Gastrocnemius medialis (tissue), 4 donors: ENCODE measurements at regions of chr10 and their contacts with region 1.

Region 1: DNA sequence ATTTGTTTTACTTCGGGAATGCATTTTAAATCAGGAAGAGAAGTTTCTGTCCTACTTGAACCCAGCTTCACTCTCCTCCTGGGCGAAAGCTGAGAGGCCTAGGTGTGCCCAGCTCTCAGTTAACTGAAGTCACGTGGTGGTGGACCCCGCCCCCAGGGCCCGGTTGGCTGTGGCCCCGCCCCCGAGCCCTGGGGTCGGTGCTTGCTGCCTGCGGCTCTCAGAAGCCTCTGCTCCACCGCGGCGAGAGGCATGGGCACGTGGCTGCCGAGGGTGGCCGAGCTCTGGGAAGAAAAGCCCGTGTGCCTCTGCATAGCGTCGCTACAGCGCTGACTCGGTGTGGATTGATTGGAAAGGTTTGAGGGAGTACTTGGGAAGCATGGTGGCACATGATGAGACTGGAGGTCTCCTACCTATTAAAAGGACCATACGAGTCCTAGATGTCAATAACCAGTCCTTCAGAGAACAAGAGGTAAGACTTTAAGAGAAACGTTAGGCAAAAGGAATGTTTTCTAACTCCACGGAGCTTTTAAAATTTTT is 34.1 kb downstream of the NET1 start:
- DNase-seq: peak; percentile 86 to 91
- ATAC-seq: peak; percentile 80 to 84
- H3K4me3 ChIP-seq: peak overlapping the region; percentile 38 to 62 (median 54)
- H3K27ac ChIP-seq: peak overlapping the region; percentile 67 to 84 (median 73)
- H3K4me1 ChIP-seq: peaks cover 25 to 32% of the 10 kb centered on the region in 2 donors
- H3K27me3 ChIP-seq: no peaks in the 10 kb centered on the region
- CTCF ChIP-seq: peak in 1 of 5 experiments; percentile 5
- POLR2A ChIP-seq: peak; percentile 75 to 92

Region 2: GRCh38 chr10:5343562-5343961 is 102.9 kb before region 1 on chr10:
- in situ Hi-C with region 1: no loop called
- intact Hi-C with region 1: no loop called
- DNase-seq: no peak
- ATAC-seq: no peak
- H3K4me3 ChIP-seq: no peak overlapping the region
- H3K27ac ChIP-seq: no peak overlapping the region
- H3K4me1 ChIP-seq: no peaks in the 10 kb centered on the region
- H3K27me3 ChIP-seq: no peaks in the 10 kb centered on the region
- CTCF ChIP-seq: no peak
- POLR2A ChIP-seq: no peak

Region 3: DNA sequence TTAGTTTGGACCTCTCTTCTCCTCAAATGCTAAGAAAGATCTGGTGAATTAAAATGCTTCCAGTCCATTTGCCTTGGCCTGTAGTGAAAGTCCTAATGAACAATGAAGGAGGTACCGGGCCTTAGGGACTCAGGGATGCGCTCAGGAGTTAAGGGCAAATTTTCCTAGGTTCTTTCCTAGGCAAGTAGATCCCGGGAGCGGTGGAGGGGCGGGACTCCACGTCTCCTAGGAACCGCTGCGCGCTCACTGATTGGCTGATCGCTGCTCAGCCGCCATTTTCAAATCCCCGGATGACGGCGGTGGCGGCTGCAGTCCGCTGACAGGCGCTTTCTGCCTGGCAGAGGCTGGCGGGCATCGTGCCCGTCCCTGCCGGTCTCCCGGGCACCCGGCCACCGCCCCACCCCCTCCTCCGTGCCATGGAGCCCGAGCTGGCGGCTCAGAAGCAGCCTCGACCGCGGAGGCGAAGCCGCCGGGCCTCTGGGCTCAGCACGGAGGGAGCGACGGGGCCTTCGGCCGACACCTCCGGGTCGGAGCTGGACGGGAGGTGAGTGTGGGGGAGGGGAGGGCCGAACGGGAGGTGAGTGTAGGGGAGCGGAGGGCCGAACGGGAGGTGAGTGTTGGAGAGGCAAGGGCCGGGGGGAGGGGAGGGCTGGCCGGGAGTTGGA is 34.0 kb before region 1 on chr10 and contains the start of gene NET1:
- in situ Hi-C with region 1: no loop called
- intact Hi-C with region 1: loop called (anchors 2 kb)
- DNase-seq: peak; percentile 87 to 93
- ATAC-seq: peak; percentile 84 to 93
- H3K4me3 ChIP-seq: peak within 1 kb of the TSS; percentile 74 to 89 (median 88)
- H3K27ac ChIP-seq: peak within 1 kb of the TSS; percentile 87 to 97 (median 94)
- H3K4me1 ChIP-seq: peaks cover 35 to 38% of the 10 kb centered on the region in 2 donors
- H3K27me3 ChIP-seq: no peaks in the 10 kb centered on the region
- CTCF ChIP-seq: no peak
- POLR2A ChIP-seq: peak; percentile 43 to 51
- total RNA-seq, gene NET1: 19.8 to 76.4 (median 36.3) TPM

Region 4: DNA sequence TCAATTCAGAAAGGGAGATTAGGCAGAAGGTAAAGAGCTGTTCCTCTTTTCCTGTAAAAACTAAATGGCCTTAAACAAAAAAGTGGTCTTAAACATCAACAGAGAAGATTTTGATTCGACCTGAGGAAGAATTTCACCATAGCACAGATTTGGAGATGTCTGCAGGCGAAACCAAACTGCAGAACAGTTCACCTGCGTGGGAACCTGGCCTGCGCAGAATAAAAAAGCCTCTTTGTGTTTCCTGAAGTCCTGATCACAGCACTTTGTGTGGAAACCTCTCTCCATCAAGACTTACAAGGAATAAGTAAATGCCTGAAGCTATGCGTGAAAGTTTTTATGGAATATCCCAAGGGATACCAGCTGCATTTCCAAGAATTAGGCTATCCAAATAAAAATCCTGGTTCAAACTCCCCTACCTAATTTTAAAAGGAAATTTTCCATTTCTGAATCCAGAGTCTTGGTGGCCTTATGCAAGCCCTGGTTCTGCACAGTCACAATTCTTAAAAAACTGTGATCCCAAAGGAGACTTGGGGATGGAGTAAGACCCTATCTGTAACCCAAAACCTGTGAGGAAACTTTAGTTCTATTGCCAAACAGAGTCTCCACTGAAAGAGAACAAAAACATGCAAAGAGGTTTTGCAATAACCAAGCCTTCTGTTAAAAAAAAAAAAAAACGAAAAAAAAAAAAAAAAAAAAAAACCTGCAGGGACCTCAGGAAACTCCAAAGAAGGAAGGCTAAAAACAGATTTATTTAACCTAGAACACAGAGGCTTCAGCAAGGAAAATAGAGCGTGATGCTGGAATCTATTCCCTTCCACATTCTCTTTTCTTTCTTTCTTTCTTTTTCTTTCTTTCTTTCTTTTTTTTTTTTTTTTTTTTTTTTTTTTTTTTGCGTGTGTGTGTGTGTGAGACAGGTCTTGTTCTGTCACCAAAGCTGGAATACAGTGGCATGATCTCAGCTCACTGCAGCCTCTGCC is 88.7 kb after region 1 on chr10:
- in situ Hi-C with region 1: no loop called
- intact Hi-C with region 1: loop called (anchors 10 kb)
- DNase-seq: no peak
- ATAC-seq: peak; percentile 87 to 92
- H3K4me3 ChIP-seq: no peak overlapping the region
- H3K27ac ChIP-seq: peak overlapping the region; percentile 41 to 50 (median 43)
- H3K4me1 ChIP-seq: peaks cover 4 to 6% of the 10 kb centered on the region in 2 donors
- H3K27me3 ChIP-seq: no peaks in the 10 kb centered on the region
- CTCF ChIP-seq: no peak
- POLR2A ChIP-seq: no peak

Region 5: DNA sequence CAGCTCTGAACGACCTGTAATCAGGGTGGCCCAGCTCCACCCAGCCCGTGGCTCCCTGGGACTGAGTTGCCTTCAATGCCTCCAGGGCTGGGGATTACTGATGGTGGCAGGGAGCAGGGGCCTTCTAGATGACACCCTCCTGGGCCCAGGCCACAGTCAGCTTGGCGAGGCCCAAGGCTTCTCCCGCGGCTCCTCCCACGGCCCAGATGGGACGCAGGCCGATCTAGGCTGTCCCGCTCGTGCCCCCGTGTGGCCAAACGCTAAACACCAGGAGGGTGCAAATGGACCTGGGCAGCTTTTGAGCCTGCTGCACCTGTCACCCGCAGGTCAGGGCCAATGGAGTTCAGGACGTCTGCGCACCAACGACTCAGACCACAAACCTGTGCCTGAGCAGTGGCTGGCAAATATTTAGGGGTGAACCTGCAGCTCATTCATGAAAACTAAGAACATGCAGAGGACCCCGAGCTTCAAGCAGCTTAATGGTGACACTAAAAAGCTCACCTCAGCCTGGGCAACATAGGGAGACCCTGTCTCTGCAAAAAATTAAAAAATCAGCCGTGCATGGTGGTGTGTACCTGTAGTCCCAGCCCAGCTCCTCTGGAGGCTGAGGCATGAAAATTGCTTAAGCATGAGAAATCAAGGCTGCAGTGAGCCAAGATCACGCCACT is 176.8 kb after region 1 on chr10:
- in situ Hi-C with region 1: loop called (anchors 5 kb)
- intact Hi-C with region 1: loop called (anchors 1 kb)
- DNase-seq: peak; percentile 67 to 85
- ATAC-seq: peak; percentile 81 to 83
- H3K4me3 ChIP-seq: peak overlapping the region in 1 of 4 donors; percentile 26
- H3K27ac ChIP-seq: peak overlapping the region; percentile 26 to 61 (median 46)
- H3K4me1 ChIP-seq: peaks cover 30 to 35% of the 10 kb centered on the region in 2 donors
- H3K27me3 ChIP-seq: no peaks in the 10 kb centered on the region
- CTCF ChIP-seq: peak; percentile 81 to 95 (median 92)
- POLR2A ChIP-seq: no peak

Region 6: DNA sequence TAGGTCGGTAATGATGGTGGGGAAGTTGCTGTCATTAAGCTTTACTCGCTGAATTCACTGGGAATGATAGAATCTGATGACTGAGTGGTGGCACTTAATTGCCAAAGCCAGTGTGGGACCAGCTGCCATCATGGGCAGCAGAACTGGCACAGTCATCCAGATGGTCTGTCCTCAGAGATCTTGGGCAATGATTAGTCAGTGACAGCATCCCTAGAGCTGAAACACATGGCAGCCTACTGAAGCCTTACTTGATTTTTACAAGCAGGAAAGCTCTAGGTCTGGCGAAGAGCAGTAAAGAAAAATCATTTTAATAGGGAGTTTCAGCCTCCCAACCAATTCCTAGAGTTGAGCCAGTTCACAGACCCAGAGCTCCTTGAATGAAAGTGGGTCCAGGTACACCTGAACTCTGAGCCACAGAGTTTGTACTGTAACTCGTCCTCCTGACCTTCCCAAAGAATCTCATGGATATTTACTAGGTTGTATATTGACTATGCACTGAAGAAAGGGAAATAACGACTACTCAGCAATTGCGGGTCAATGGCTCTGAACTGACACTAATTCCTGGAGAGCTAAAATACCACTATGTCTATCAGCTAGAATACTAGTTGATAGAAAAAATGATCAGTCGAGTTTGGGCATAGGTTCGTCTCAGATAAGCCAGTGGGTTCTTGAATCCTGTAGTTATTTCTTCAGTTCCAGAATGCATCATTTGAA is 224.4 kb after region 1 on chr10:
- in situ Hi-C with region 1: no loop called
- intact Hi-C with region 1: no loop called
- DNase-seq: no peak
- ATAC-seq: no peak
- H3K4me3 ChIP-seq: no peak overlapping the region
- H3K27ac ChIP-seq: no peak overlapping the region
- H3K4me1 ChIP-seq: peaks cover 6 to 9% of the 10 kb centered on the region in 2 donors
- H3K27me3 ChIP-seq: peaks cover 0 to 3% (median 0%) of the 10 kb centered on the region in 3 donors
- CTCF ChIP-seq: no peak
- POLR2A ChIP-seq: no peak

Region 7: GRCh38 chr10:5873515-5873995 is 427.1 kb after region 1 on chr10:
- in situ Hi-C with region 1: loop called in 2 of 4 experiments (anchors 10 to 25 kb)
- intact Hi-C with region 1: loop called (anchors 5 kb)
- DNase-seq: peak in 1 of 2 donors; percentile 52
- ATAC-seq: peak; percentile 74 to 84
- H3K4me3 ChIP-seq: no peak overlapping the region
- H3K27ac ChIP-seq: no peak overlapping the region
- H3K4me1 ChIP-seq: peaks cover 0 to 4% of the 10 kb centered on the region in 2 donors
- H3K27me3 ChIP-seq: no peaks in the 10 kb centered on the region
- CTCF ChIP-seq: peak; percentile 49 to 71 (median 69)
- POLR2A ChIP-seq: no peak